ENCODE measurements at regions of chr3 and their contacts with region 1.

Region 1: DNA sequence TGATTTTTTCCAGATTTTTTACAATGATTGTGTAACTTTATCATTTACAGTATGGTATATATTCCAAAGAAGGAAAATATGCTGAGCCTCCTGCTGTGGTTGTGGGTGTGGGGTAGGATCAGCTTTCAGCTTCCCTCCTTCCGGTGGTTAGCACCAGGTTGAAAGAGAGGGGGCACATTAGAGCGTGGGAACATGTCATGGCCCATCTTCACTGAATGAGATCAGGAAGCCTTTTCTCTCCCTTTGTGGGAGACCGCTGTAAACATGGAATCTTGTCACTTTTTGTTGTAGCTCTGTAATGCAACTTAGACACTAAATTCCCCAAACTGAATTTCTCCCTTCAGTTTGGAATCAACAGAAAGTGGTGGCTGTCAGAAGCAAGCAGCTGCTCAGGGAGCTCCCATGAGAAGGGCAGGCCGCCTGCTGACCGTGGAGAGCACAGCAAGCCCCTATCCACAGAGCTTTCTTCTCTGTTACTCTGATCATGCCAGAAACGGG is 86.7 kb upstream of the LIMD1 start:
- DNase-seq: no peak
- ATAC-seq: peak; percentile 70; the same call in 2 of the 3 replicates
- H3K4me3 ChIP-seq: no peak overlapping the region
- H3K27ac ChIP-seq: no peak overlapping the region
- H3K4me1 ChIP-seq: peaks cover 8% of the 10 kb centered on the region
- H3K27me3 ChIP-seq: no peaks in the 10 kb centered on the region
- CTCF ChIP-seq: no peak
- EP300 ChIP-seq: no peak
- POLR2A ChIP-seq: no peak
- RAD21 ChIP-seq: no peak

Region 2: GRCh38 chr3:45269952-45270351 is 237.9 kb before region 1 on chr3:
- CTCF ChIA-PET with region 1: no interaction called
- POLR2A ChIA-PET with region 1: no interaction called
- in situ Hi-C with region 1: no loop called
- intact Hi-C with region 1: no loop called
- DNase-seq: no peak
- ATAC-seq: no peak
- H3K4me3 ChIP-seq: no peak overlapping the region
- H3K27ac ChIP-seq: no peak overlapping the region
- H3K4me1 ChIP-seq: no peaks in the 10 kb centered on the region
- H3K27me3 ChIP-seq: peaks cover 0 to 15% of the 10 kb centered on the region in 2 experiments; a peak in 3 of 5 replicates
- CTCF ChIP-seq: no peak
- EP300 ChIP-seq: no peak
- POLR2A ChIP-seq: no peak
- RAD21 ChIP-seq: no peak

Region 3: GRCh38 chr3:45665101-45665572 is 157.3 kb after region 1 on chr3:
- CTCF ChIA-PET with region 1: interaction called, 13 read pairs
- POLR2A ChIA-PET with region 1: no interaction called
- in situ Hi-C with region 1: no loop called
- intact Hi-C with region 1: loop called (anchors 2 kb)
- DNase-seq: peak; percentile 71
- ATAC-seq: peak; percentile 78
- H3K4me3 ChIP-seq: no peak overlapping the region
- H3K27ac ChIP-seq: no peak overlapping the region
- H3K4me1 ChIP-seq: peaks cover 20% of the 10 kb centered on the region
- H3K27me3 ChIP-seq: no peaks in the 10 kb centered on the region
- CTCF ChIP-seq: peak; percentile 69
- EP300 ChIP-seq: no peak
- POLR2A ChIP-seq: no peak
- RAD21 ChIP-seq: 0 out of 2 replicates have a peak, but pooled peaks have one; percentile 32

Region 4: DNA sequence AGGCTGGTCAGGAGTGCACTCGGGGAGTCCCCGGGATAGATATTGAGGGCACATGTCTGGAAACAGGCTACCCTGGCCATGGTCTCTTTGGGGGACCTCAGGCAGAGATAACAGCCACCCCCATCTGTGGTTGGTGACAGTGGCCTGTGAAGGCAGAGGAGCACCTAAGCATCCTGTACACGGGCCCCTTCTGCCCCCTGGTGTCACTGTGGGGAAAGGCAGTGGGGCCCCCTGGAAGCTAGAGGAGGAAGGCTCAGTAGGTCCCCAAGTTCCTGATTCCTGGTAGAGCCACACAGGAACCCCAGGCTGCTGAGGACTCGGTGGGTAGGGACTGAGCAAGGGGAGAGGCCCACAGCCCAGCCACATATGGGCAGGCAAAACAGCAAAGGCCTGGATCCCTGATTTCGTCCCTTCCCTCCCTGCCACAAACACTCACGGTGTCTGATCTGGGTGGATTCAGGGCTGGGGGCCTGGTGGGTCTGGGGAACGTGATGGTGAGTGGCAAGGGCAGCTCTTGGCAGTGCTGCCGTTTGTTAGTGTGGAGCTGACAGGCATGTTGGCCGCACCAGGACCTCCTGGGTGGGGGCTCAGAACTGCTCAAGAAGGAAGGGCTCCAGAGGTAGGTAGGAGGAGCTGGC is 421.3 kb after region 1 on chr3:
- CTCF ChIA-PET with region 1: interaction called, 3 read pairs
- POLR2A ChIA-PET with region 1: no interaction called
- in situ Hi-C with region 1: no loop called
- intact Hi-C with region 1: loop called (anchors 2 kb)
- DNase-seq: peak; percentile 12
- ATAC-seq: peak; percentile 96
- H3K4me3 ChIP-seq: no peak overlapping the region
- H3K27ac ChIP-seq: no peak overlapping the region
- H3K4me1 ChIP-seq: no peaks in the 10 kb centered on the region
- H3K27me3 ChIP-seq: no peaks in the 10 kb centered on the region
- CTCF ChIP-seq: peak; percentile 80
- EP300 ChIP-seq: no peak
- POLR2A ChIP-seq: no peak
- RAD21 ChIP-seq: peak; percentile 72

Measured in HepG2 (cell line).